HepG2 (cell line): ENCODE measurements at regions of chr12 and their contacts with region 1.

Region 1: DNA sequence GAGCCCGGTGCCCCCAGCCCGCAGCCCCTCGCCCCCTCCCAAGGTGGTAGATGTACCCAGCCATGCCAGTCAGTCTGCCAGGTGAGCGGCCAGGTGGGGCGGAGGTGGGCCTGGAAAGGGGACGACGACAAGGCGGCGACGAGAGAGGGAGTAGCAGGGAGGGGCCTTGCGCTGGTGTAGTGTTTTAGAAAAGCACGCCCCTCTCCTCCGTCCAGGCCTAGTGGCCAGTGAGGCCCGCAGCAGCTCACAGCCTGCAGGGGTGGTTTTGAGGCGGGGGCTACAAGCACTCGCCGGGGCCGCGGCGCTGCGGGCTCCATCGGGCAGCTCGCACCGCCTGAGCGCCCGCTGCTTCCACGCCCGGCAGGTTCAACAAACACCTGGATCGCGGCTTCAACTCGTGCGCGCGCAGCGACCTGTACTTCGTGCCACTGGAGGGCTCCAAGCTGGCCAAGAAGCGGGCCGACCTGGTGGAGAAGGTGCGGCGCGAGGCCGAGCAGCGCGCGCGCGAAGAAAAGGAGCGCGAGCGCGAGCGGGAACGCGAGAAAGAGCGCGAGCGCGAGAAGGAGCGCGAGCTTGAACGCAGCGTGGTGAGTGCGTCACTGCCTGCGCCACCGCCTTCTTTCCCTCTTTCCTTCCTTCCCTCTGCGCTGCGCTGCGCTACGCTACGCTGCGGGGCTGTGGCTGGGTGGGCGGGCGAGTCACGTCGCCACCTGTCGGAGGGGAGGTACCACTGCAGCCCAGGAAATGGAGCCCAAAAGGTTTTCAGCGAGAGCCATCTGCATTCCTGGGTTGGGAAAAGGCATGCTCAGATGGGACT is 5.9 kb upstream of the RNU7-1 start:
- DNase-seq: peak; percentile 91
- ATAC-seq: peak; percentile 93
- H3K4me3 ChIP-seq: peak overlapping the region; percentile 49 to 78 (median 70); a peak in 5 of 6 replicates
- H3K27ac ChIP-seq: peak overlapping the region; percentile 90
- H3K4me1 ChIP-seq: peaks cover 26% of the 10 kb centered on the region
- H3K27me3 ChIP-seq: no peaks in the 10 kb centered on the region
- CTCF ChIP-seq: peak; percentile 99
- EP300 ChIP-seq: 0 out of 4 replicates have a peak, but pooled peaks of 1 of the 2 experiments have one; percentile 10
- POLR2A ChIP-seq: peak in 1 of 2 experiments; percentile 63; a peak in 2 of 4 replicates
- RAD21 ChIP-seq: peak; percentile 66; the same call in 1 of the 2 replicates

Region 2: DNA sequence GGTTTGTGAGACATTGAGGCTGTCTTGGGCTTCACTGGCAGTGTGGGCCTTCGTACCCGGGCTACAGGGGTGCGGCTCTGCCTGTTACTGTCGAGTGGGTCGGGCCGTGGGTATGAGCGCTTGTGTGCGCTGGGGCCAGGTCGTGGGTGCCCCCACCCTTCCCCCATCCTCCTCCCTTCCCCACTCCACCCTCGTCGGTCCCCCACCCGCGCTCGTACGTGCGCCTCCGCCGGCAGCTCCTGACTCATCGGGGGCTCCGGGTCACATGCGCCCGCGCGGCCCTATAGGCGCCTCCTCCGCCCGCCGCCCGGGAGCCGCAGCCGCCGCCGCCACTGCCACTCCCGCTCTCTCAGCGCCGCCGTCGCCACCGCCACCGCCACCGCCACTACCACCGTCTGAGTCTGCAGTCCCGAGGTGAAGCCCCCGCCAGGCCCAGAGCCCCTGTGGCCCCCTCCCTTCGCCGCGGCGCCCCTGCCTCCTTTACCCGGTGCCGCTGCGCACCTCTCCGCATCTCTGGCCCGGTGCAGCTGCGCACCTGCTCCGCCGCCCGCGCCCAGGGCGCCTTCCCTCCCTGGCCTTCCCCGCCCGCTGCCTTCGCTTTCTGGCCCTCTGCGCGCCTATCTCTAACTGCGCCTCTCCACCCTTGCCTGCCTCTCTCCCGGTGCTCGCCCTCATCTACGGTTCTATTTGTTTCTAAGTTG is 23.3 kb before region 1 on chr12 and contains the start of gene ENO2:
- CTCF ChIA-PET with region 1: no interaction called
- POLR2A ChIA-PET with region 1: interaction called, 10 read pairs
- in situ Hi-C with region 1: no loop called
- intact Hi-C with region 1: no loop called
- DNase-seq: peak; percentile 44
- ATAC-seq: peak; percentile 89
- H3K4me3 ChIP-seq: peak within 1 kb of the TSS; percentile 63 to 90 (median 77)
- H3K27ac ChIP-seq: peak within 1 kb of the TSS; percentile 84
- H3K4me1 ChIP-seq: peaks cover 48% of the 10 kb centered on the region
- H3K27me3 ChIP-seq: no peaks in the 10 kb centered on the region
- CTCF ChIP-seq: no peak
- EP300 ChIP-seq: no peak
- POLR2A ChIP-seq: peak in 1 of 2 experiments; percentile 68; a peak in 2 of 4 replicates
- RAD21 ChIP-seq: no peak
- total RNA-seq, gene ENO2: 15.9 and 19.3 TPM in 2 replicates

Region 3: DNA sequence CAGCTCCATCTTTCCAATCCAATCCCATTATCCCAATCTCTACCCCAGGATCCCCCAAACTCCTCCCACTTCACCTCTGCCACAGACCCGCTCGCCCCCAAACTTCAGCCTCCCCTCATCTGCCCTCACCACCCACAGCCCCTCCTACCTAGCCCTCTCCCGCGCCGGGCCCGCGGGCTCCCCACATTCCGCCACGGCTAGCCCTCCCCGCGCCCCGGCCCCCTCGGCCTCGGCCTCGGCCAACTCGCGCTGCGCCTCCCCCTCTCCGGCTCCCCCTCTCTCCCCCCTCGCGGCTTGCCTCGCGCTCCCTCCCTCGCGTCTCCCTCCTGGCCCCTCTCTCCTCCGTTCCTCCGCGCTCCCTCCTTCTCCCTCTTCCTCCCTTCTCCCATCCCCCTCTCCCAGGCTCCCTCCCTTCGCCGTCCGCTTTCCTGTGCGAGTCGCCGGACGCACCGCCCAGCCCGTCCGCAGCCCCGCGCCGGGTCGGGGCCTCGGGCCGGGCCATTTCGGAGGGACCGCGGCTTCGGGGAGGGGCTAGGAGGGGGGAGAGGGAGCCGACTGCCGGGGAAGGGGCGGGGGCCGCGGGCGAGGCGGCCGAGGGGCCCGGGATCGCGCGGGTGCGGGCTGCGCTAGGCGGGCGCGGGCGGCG is 10.2 kb before region 1 on chr12 and contains the start of gene ATN1:
- CTCF ChIA-PET with region 1: interaction called, 16 read pairs
- POLR2A ChIA-PET with region 1: interaction called, 55 read pairs
- in situ Hi-C with region 1: no loop called
- intact Hi-C with region 1: loop called (anchors 2 kb)
- DNase-seq: no peak
- ATAC-seq: peak; percentile 18
- H3K4me3 ChIP-seq: peak within 1 kb of the TSS; percentile 82 to 93 (median 90)
- H3K27ac ChIP-seq: peak within 1 kb of the TSS; percentile 64
- H3K4me1 ChIP-seq: peaks cover 66% of the 10 kb centered on the region
- H3K27me3 ChIP-seq: no peaks in the 10 kb centered on the region; a peak in 1 of 5 replicates
- CTCF ChIP-seq: no peak
- EP300 ChIP-seq: no peak
- POLR2A ChIP-seq: peak in 1 of 2 experiments; percentile 53; a peak in 1 of 4 replicates
- RAD21 ChIP-seq: no peak
- total RNA-seq, gene ATN1: 2.1 TPM in 2 replicates